Activated T-helper 1 cell treated with anti-CD3 and anti-CD28 coated beads, Interleukin-12 subunit alpha, Interleukin-12 subunit beta, Interleukin-2, Interleukin-4 antibody, amounts not matched to agents 30 ng/mL and 10 ng/mL and 1 ng/mL, durations not matched to agents 14 hours and 24 hours and 36 hours (primary cell): ENCODE measurements at regions of chrX and their contacts with region 1.

Region 1: DNA sequence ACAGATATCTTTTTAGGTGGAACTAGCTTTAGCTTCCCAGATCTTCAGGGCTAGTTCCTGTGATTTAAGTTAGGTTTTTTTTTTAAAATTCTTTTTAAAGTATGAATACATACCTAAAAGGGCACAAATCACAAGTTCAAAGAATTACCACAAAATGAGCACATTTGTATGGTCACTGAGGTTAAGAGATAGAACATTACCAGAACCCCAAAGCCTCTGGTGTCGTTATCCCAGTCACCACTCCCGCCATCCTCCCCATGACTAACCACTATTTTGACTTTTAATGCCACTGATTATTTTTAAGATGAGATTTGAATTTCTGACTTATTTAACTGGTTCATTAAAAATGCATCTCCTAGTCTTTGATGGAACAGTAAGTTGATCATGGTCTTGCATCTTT is 5.4 kb downstream of the PGK1 start:
- DNase-seq: no peak
- H3K4me3 Mint-ChIP-seq: peak overlapping the region; percentile 97
- H3K27ac Mint-ChIP-seq: peak overlapping the region; percentile 65
- H3K4me1 Mint-ChIP-seq: peaks cover 55% of the 10 kb centered on the region
- H3K27me3 Mint-ChIP-seq: no peaks in the 10 kb centered on the region

Region 2: DNA sequence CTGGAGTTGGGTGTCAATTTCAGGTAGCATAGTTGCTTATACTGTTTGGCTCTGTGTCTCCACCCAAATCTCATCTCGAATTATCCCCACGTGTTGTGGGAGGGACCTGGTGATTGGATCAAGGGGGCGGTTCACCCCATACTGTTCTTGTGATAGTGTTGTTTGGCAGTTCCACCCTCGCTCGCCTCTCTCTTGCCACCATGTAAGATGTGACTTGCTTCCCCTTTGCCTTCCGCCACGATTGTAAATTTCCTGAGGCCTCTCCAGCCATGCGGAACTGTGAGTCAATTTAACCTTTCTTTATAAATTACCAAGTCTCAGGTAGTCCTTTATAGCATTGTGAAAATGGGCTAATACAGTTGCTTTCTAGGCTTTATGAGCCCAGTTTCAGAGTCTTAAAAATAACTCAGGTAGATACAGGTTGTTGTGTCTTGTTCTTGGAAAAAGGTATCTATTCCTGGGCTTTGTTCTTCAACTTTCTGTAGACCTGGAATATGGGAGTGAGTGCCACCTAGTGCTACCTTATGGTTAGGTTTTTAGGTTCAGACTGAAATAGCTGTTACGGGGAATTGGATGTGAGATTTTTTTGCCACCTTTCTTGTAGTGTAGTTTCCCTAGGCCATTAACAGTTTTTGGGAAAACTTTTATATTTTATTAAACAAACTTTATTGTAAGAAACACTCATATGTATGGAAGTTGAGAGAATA is 10.2 kb after region 1 on chrX:
- intact Hi-C with region 1: loop called (anchors 2 kb)
- DNase-seq: no peak
- H3K4me3 Mint-ChIP-seq: no peak overlapping the region
- H3K27ac Mint-ChIP-seq: no peak overlapping the region
- H3K4me1 Mint-ChIP-seq: peaks cover 62% of the 10 kb centered on the region
- H3K27me3 Mint-ChIP-seq: no peaks in the 10 kb centered on the region

Region 3: DNA sequence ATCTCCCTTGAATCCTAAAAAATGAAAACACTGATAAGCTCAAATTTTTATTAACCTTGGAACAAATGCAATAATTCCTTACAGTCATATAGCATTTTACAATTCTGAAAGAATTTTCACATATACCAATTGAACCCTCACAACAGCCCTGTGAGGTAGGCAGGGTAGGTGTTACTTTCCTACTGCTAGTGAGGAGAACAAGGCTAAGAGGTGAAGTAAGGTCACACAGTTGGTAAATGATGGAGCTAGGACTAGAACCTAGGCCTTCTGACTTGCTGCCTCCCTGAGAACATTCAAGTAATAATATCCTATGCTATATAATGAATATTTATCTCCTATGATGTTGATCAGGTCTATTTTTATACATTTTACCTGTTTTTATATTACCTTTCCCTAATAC is 20.3 kb after region 1 on chrX:
- intact Hi-C with region 1: no loop called
- DNase-seq: no peak
- H3K4me3 Mint-ChIP-seq: no peak overlapping the region
- H3K27ac Mint-ChIP-seq: no peak overlapping the region
- H3K4me1 Mint-ChIP-seq: peaks cover 7% of the 10 kb centered on the region
- H3K27me3 Mint-ChIP-seq: no peaks in the 10 kb centered on the region